ENCODE measurements at regions of chr7 and their contacts with region 1.

Region 1: DNA sequence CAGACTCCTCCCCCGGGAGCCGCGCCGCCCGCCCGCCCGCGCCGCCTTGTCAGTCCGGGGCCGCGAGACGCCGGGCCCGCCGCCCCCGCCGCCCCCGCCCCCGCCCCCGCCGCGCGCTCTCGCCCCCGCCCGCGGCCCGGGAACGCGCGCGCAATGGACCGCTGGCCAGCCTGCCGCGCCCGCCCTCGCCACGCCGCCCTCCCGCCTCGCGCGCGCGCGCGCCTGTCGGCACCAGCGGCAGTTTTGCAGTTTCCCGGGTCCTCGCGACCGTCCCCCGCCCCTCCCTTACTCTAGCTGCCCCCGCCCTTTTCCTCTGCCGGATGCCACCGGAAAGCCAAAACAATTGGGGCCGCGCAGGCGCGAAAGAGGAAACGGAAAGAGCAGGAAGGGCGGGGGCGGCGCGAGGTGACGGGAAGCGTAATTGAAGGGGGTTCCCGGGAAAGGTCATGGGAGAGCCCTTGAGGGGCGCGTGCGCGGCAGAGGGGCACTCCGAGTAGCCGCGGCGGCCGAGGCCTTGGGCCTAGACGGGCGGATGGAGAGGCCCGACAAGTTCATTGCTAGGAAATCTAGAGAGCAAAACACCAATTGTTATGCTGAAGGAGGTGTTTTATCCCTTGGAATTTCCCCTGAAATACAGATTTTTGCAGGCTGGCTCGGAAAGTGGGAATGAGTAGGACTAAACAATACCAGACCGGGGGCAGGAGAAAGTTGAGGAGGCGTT is 400 bp upstream of the KBTBD2 start:
- DNase-seq: peak; percentile 99
- ATAC-seq: peak; percentile 89

Region 2: GRCh38 chr7:32803406-32804141 is 88.4 kb before region 1 on chr7:
- intact Hi-C with region 1: loop called (anchors 5 kb)
- DNase-seq: no peak
- ATAC-seq: no peak

Region 3: GRCh38 chr7:32846701-32847100 is 45.3 kb before region 1 on chr7:
- intact Hi-C with region 1: loop called (anchors 2 kb)
- DNase-seq: peak; percentile 92
- ATAC-seq: peak; percentile 99